PC-3 (cell line): ENCODE measurements at regions of chr15 and their contacts with region 1.

Region 1: DNA sequence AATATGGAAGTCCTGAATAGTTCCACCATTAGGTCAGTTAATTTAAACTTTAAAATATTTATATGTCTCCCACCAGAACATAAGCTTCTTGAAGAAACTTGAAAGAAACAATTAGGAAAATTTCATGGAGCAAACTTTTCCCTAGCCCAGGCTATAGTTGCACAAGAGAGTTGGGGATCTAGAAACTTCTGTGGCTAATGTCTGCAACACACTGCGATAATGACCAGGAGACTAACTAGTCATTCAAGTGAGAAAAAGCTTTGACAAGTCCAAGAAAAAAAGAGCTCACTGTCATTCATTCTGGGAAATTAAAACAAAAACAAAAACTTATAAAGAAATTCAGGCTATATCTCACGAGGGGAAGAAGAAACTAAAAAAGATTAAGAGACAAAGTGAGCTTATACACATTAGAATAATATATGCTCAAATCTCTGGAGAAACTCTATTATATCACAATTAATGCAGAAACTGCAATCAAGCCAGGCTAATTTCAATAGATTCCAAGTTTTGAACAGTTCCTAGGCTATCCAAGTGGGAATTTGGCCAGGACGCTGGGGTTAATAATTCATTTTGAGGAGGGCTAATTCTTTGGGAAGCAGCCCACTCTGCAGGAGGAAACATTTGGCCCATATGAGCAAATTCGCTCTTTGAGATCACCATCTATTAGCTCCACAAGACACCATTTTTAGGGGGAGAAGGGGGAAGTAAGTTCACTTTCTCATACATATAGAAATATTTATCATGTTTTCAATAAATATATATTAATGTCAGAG is 134.6 kb downstream of the MEIS2 start:
- DNase-seq: no peak
- ATAC-seq: no peak
- H3K4me3 ChIP-seq: no peak overlapping the region
- H3K27ac ChIP-seq: no peak overlapping the region
- H3K4me1 ChIP-seq: no peaks in the 10 kb centered on the region
- H3K27me3 ChIP-seq: no peaks in the 10 kb centered on the region
- CTCF ChIP-seq: no peak

Region 2: DNA sequence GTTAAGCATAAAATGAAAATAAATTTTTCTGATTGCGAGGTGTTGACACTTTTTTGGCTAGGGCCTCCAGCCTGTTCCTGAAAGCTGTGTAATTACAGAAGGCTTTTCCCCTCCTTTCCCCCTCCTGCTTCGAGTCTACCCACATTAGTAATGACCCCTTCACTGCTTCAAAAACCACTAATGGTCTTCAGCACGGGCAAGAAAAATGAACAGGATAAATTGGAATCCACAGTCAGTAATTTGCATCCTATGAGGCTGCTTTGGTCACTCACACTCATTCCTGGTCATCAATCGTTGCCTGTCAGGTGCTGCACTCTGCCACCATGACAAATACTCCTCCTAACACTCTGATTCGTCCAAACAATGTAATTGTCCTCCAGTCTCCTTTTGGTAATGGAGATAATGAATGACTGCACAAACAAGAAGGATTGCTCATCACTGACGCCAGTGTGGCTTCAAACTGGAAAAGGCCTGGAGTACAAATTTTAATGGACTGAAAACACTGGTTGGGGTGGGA is 14.0 kb before region 1 on chr15:
- CTCF ChIA-PET with region 1: no interaction called
- POLR2A ChIA-PET with region 1: interaction called, 33 read pairs
- intact Hi-C with region 1: no loop called
- DNase-seq: peak; percentile 61
- ATAC-seq: peak; percentile 38; the same call in 1 of the 2 replicates
- H3K4me3 ChIP-seq: no peak overlapping the region
- H3K27ac ChIP-seq: no peak overlapping the region
- H3K4me1 ChIP-seq: no peaks in the 10 kb centered on the region; the same call in 1 of the 2 replicates
- H3K27me3 ChIP-seq: no peaks in the 10 kb centered on the region
- CTCF ChIP-seq: no peak

Region 3: GRCh38 chr15:37100109-37100965 is 134.6 kb after region 1 on chr15 and contains the start of gene MEIS2:
- CTCF ChIA-PET with region 1: no interaction called
- POLR2A ChIA-PET with region 1: no interaction called
- intact Hi-C with region 1: loop called (anchors 10 kb)
- DNase-seq: peak; percentile 85
- ATAC-seq: peak; percentile 41
- H3K4me3 ChIP-seq: peak within 1 kb of the TSS; percentile 93
- H3K27ac ChIP-seq: peak within 1 kb of the TSS; percentile 87
- H3K4me1 ChIP-seq: peaks cover 24% of the 10 kb centered on the region; the same call in 1 of the 2 replicates
- H3K27me3 ChIP-seq: no peaks in the 10 kb centered on the region
- CTCF ChIP-seq: no peak
- total RNA-seq, gene MEIS2: 10.0 and 17.5 TPM in 2 replicates

Region 4: DNA sequence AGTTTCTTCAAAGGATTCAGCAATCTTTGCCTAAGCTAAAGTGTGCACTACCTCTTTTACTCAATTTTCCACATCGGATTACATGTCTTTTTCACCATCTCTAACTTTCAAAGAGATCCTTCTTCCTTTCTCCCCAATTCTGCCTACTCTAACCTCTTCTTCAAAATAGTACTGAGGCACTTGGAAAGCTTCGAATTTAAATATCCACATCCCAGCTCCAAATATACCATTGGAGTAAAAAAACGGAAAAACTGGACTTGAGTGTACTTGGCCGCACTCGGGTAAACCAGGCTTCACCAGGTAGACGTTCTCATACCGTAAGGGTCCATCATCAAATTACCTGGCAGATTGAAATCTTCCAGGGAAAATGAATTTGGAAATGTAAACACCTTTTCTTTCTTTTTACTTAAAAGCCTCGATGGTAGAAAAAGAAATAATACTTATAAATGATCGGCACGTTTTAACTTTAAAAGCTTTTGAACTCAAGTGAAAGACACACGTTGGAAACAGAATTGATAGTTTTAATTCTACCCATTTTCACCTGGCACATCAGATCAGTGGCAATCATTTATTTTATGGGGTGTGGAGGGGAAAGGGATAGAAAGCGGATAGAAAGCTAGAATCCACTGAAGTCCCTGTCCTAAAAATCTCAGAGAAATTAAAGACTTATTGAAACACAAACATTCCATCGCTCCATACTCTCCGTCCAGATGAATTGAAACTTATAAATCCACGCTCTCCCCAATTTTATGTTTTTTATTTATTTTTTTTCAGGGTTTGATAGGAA is 142.8 kb after region 1 on chr15:
- CTCF ChIA-PET with region 1: no interaction called
- POLR2A ChIA-PET with region 1: interaction called, 18 read pairs
- intact Hi-C with region 1: no loop called
- DNase-seq: no peak
- ATAC-seq: no peak
- H3K4me3 ChIP-seq: no peak overlapping the region
- H3K27ac ChIP-seq: no peak overlapping the region
- H3K4me1 ChIP-seq: no peaks in the 10 kb centered on the region
- H3K27me3 ChIP-seq: no peaks in the 10 kb centered on the region
- CTCF ChIP-seq: no peak